Tibial artery (tissue), 4 donors: ENCODE measurements at regions of chr16 and their contacts with region 1.

Region 1: GRCh38 chr16:89261691-89262563 is 44.4 kb downstream of the ZNF778 start:
- DNase-seq: no peak
- H3K4me3 ChIP-seq: no peak overlapping the region
- H3K27ac ChIP-seq: no peak overlapping the region
- H3K4me1 ChIP-seq: peaks cover 0 to 8% (median 7%) of the 10 kb centered on the region in 4 donors
- H3K27me3 ChIP-seq: peaks cover 0 to 15% of the 10 kb centered on the region in 2 donors
- CTCF ChIP-seq: no peak

Region 2: DNA sequence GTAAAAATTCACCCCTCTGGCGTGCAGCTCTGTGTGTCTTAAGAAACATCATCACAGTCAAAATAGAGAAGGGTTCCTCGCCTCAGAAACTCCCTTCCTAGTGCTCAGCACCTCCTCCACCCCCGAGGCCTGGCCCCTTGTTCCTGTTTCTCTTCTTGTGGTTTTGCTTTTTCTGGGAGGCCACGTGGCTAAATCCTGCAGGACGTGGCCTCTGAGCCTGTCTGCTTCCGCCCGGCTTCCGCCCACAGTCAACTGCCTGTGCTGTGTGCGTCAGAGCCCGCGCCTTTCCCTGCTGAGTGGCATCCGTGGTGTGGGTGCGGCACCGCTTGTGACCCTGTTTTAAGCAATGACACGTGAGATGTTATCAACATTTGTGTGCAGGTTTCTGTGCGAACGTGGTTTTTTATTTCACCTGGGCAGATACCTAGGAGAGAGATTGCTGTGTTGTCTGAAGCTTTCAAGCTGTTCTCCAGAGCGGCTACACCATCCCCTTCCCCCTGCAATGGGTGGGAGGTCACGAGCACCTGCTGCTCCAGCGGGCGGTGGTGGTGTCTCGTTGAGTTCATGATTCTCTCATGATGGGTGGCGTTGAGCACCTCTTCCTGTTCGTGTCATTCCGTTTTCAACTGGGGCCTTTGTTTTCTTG is 146.6 kb before region 1 on chr16:
- intact Hi-C with region 1: no loop called
- DNase-seq: peak; percentile 75 to 83
- H3K4me3 ChIP-seq: no peak overlapping the region
- H3K27ac ChIP-seq: no peak overlapping the region
- H3K4me1 ChIP-seq: peaks cover 0 to 4% (median 0%) of the 10 kb centered on the region in 4 donors
- H3K27me3 ChIP-seq: no peaks in the 10 kb centered on the region
- CTCF ChIP-seq: no peak

Region 3: GRCh38 chr16:89217388-89218191 is 44.3 kb before region 1 on chr16 and contains the start of gene ZNF778:
- intact Hi-C with region 1: no loop called
- DNase-seq: peak; percentile 84 to 91
- H3K4me3 ChIP-seq: peak within 1 kb of the TSS; percentile 74 to 84
- H3K27ac ChIP-seq: peak within 1 kb of the TSS; percentile 88 to 95
- H3K4me1 ChIP-seq: peaks cover 0 to 28% (median 19%) of the 10 kb centered on the region in 4 donors
- H3K27me3 ChIP-seq: no peaks in the 10 kb centered on the region
- CTCF ChIP-seq: no peak

Region 4: GRCh38 chr16:89275837-89276720 is 14.2 kb after region 1 on chr16:
- intact Hi-C with region 1: loop called (anchors 1 kb)
- DNase-seq: no peak
- H3K4me3 ChIP-seq: no peak overlapping the region
- H3K27ac ChIP-seq: no peak overlapping the region
- H3K4me1 ChIP-seq: no peaks in the 10 kb centered on the region
- H3K27me3 ChIP-seq: no peaks in the 10 kb centered on the region
- CTCF ChIP-seq: no peak